Common myeloid progenitor, CD34-positive (primary cell): ENCODE measurements at regions of chr16 and their contacts with region 1.

Region 1: DNA sequence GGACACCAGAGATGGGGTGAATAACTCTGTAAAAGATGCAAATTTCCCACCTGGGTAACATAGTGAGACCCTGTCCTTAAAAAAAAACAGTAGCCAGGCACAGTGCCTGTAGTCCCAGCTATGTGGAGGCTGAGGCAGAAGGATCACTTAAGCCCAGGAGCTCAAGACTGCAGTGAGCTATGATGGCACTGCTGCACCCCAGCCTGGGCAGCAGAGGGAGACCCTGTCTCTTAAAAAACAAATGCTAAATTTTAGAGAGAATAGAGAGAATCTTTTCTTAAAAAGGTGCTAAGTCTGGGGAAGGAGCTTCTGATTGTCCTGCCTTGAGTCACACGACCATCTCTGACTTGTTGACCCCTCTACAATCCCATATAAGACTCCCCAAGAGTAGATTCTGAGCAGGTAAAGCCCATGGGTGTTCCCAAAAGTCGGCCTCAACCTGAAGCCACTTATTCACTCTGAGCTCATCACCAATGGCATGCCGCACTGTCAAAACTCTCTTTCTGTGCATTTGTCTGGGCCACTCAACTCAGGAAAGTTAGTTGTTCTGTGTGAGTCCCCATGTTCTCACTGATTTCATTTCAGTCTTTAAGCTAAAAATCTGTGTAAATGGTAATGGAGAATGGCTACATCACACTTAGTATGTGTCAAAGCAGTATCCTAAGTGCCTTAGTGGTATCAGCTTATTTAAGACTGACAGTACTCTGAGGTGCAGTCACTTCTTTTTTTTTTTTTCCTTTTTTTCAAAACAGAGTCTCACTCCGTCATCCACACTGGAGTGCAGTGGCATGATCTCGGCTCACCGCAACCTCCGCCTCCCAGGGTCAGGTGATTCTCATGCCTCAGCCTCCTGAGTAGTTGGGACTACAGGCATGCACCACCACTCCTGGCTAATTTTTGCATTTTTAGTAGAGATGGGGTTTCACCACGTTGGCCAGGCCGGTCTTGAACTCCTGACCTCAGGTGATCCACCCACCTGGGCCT is 41.6 kb downstream of the PRKCB start:
- DNase-seq: peak; percentile 56 to 69 (median 68)
- H3K4me3 ChIP-seq: no peak overlapping the region
- H3K27ac ChIP-seq: no peak overlapping the region
- H3K4me1 ChIP-seq: peaks cover 36 to 78% (median 61%) of the 10 kb centered on the region in 4 experiments
- H3K27me3 ChIP-seq: no peaks in the 10 kb centered on the region

Region 2: GRCh38 chr16:23889189-23889588 is 11.8 kb after region 1 on chr16:
- CTCF ChIA-PET with region 1: interaction called, 47 read pairs
- POLR2A ChIA-PET with region 1: interaction called, 6 read pairs
- DNase-seq: no peak
- H3K4me3 ChIP-seq: no peak overlapping the region
- H3K27ac ChIP-seq: no peak overlapping the region
- H3K4me1 ChIP-seq: peaks cover 2 to 26% (median 11%) of the 10 kb centered on the region in 4 experiments
- H3K27me3 ChIP-seq: no peaks in the 10 kb centered on the region

Region 3: DNA sequence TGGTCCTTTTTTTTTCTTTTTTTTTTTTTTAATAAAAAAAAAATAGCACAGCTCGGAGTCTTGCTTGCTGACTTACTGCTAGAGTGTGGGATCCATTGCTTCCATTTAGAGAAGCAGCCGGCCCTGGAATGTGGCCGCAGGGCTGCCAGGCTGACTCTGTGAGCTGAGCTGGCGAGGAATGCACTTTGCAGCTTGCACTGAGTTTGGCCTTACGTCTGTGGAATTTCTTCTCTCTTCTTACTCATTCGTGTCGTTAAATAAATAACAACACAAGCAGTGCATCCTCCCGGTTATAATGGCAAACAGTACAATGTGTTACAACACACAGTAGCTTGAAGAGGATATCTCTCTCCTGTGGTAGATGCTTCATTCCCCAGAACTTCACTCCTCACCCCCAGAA is 27.6 kb after region 1 on chr16:
- CTCF ChIA-PET with region 1: interaction called, 21 read pairs
- POLR2A ChIA-PET with region 1: interaction called, 3 read pairs
- DNase-seq: no peak
- H3K4me3 ChIP-seq: no peak overlapping the region
- H3K27ac ChIP-seq: peak overlapping the region in 1 of 2 experiments; percentile 18
- H3K4me1 ChIP-seq: peaks cover 29 to 92% (median 72%) of the 10 kb centered on the region in 4 experiments
- H3K27me3 ChIP-seq: no peaks in the 10 kb centered on the region

Region 4: GRCh38 chr16:23952128-23952970 is 75.0 kb after region 1 on chr16:
- CTCF ChIA-PET with region 1: interaction called, 10 read pairs
- POLR2A ChIA-PET with region 1: interaction called, 3 read pairs
- DNase-seq: peak; percentile 90 to 97 (median 95)
- H3K4me3 ChIP-seq: peak overlapping the region in 5 of 7 experiments; percentile 4 to 62 (median 45)
- H3K27ac ChIP-seq: peak overlapping the region; percentile 75 to 83
- H3K4me1 ChIP-seq: peaks cover 27 to 79% (median 72%) of the 10 kb centered on the region in 4 experiments
- H3K27me3 ChIP-seq: no peaks in the 10 kb centered on the region

Region 5: DNA sequence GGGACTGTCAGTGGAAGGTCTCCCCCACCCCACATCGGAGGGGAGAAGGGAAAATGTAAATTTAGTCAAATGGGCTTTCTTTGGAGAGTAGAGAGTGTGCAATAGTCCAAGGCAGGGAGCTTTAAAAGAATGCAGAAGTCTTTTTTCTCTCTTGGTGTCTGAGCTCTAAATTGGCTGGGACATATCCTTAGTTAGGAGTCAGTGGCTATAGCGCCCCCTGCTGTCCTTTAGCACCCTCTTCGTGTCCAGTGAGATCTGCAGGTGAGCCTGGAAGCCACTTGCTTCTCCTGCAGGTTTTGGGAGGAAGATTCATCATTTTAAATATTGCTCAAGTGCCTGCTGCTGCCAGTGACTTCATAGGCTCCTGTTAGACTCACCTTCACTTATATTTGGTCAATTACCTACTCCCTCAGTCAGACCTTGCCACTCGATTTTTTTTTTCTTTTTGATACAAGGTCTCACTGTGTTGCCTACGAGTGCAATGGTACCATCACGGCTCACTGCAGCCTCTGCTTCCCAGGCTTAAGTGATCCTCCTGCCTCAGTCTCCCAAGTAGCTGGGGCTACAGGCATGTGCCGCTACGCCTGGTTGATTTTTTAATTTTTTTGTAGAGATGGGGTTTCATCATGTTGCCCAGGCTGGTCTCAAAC is 133.2 kb after region 1 on chr16:
- CTCF ChIA-PET with region 1: interaction called, 117 read pairs
- POLR2A ChIA-PET with region 1: interaction called, 4 read pairs
- DNase-seq: peak; percentile 93 to 96 (median 94)
- H3K4me3 ChIP-seq: no peak overlapping the region
- H3K27ac ChIP-seq: no peak overlapping the region
- H3K4me1 ChIP-seq: peaks cover 20 to 68% (median 50%) of the 10 kb centered on the region in 4 experiments
- H3K27me3 ChIP-seq: no peaks in the 10 kb centered on the region